Calu3 (cell line): ENCODE measurements at regions of chr10 and their contacts with region 1.

Region 1: DNA sequence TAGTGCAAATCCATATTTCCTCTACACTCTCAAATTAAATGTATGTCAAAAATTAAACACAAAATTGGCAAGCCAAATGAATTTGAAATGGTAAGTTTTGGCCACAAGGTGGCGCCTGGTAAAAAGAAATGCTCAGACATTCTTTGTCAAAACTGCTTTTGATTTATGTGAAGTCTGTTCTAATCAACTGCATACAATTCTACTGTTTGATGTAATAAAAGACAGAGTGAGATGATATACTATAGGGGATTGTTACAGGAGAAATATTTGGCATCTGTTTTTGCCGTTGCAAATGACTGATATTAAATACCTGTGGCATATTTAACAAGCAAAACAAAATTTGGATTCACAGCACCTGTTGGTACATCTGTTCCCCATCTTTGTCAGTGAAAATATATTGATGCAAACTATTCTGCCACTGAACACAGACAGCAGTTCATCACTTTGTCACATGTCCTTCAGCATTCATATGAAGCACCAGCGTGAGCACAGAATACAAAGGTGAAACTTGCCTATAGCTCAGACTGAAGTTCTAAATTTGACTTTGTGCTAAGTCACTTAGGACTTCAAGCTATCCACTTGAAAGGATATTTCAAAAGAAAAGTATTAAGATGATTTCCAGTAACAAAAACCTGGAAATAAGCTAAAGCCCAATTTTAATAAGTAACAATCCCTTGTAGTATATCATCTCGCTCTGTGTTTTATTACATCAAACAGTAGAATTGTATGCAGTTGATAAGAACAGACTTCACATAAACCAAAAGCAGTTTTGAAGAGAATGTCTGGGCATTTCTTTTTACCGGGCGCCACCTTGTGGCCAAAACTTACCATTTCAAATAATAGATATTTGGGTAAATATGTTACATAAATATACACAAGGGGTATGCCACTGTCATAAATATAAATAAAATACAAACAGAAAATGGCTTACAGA is 10.2 kb upstream of the CH25H start:
- DNase-seq: peak; percentile 47
- H3K4me3 Mint-ChIP-seq: no peak overlapping the region
- H3K27ac Mint-ChIP-seq: no peak overlapping the region
- H3K4me1 Mint-ChIP-seq: no peaks in the 10 kb centered on the region
- H3K27me3 Mint-ChIP-seq: no peaks in the 10 kb centered on the region
- CTCF ChIP-seq: peak; percentile 33

Region 2: DNA sequence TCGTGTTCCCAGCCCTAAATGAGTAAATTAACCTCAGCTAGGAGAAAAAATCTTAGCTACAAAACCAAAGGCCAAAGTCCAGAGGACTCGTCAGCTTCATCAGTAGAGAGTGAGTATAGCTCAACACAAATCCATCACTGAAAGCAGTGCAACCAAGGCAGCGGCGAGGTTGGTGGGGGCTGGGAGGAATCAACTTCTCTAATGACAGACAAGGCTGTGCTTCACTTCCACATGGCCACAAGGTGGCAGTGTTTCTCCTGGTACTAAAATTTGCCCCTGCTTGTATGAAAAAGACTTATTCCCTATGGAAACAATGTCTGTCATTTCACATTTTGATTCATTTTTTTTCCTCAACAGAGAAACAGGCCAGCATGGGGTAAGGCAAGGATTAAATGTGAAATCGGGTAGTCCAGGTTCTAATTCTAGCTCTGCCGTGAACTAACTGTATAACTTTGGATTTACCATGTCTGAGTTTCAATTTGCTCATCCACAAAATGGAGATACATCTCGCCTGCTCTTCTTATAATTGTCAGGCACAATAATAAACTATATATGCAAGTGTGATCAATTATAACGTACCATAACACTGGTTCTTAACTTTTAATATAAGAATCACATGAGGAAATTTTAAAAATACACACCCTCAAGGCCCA is 187.4 kb before region 1 on chr10:
- CTCF ChIA-PET with region 1: interaction called, 3 read pairs
- intact Hi-C with region 1: loop called (anchors 1 kb)
- DNase-seq: peak; percentile 70
- H3K4me3 Mint-ChIP-seq: no peak overlapping the region
- H3K27ac Mint-ChIP-seq: no peak overlapping the region
- H3K4me1 Mint-ChIP-seq: peaks cover 21% of the 10 kb centered on the region
- H3K27me3 Mint-ChIP-seq: no peaks in the 10 kb centered on the region
- CTCF ChIP-seq: peak; percentile 48

Region 3: GRCh38 chr10:89201345-89202032 is 15.8 kb before region 1 on chr10:
- CTCF ChIA-PET with region 1: no interaction called
- intact Hi-C with region 1: no loop called
- DNase-seq: no peak
- H3K4me3 Mint-ChIP-seq: no peak overlapping the region
- H3K27ac Mint-ChIP-seq: no peak overlapping the region
- H3K4me1 Mint-ChIP-seq: peaks cover 2% of the 10 kb centered on the region
- H3K27me3 Mint-ChIP-seq: no peaks in the 10 kb centered on the region
- CTCF ChIP-seq: no peak

Region 4: GRCh38 chr10:89389254-89389653 is 171.9 kb after region 1 on chr10:
- CTCF ChIA-PET with region 1: interaction called, 3 read pairs
- intact Hi-C with region 1: loop called (anchors 1 kb)
- DNase-seq: no peak
- H3K4me3 Mint-ChIP-seq: no peak overlapping the region
- H3K27ac Mint-ChIP-seq: no peak overlapping the region
- H3K4me1 Mint-ChIP-seq: no peaks in the 10 kb centered on the region
- H3K27me3 Mint-ChIP-seq: no peaks in the 10 kb centered on the region
- CTCF ChIP-seq: no peak